Natural killer cell (primary cell): ENCODE measurements at regions of chr5 and their contacts with region 1.

Region 1: GRCh38 chr5:143108498-143109117 is 294.9 kb downstream of the NR3C1 start:
- DNase-seq: no peak
- ATAC-seq: no peak
- H3K4me3 ChIP-seq: no peak overlapping the region
- H3K4me3 Mint-ChIP-seq: no peak overlapping the region
- H3K27ac ChIP-seq: no peak overlapping the region
- H3K27ac Mint-ChIP-seq: peak overlapping the region in 1 of 2 donors; percentile 8
- H3K4me1 ChIP-seq: no peaks in the 10 kb centered on the region
- H3K4me1 Mint-ChIP-seq: peaks cover 38 to 55% of the 10 kb centered on the region in 2 donors
- H3K27me3 ChIP-seq: no peaks in the 10 kb centered on the region
- H3K27me3 Mint-ChIP-seq: no peaks in the 10 kb centered on the region
- CTCF ChIP-seq: no peak

Region 2: GRCh38 chr5:143121135-143121475 is 12.5 kb after region 1 on chr5:
- intact Hi-C with region 1: loop called (anchors 1 kb)
- DNase-seq: peak; percentile 17 to 52
- ATAC-seq: peak; percentile 73 to 92 (median 74)
- H3K4me3 ChIP-seq: no peak overlapping the region
- H3K4me3 Mint-ChIP-seq: peak overlapping the region; percentile 22
- H3K27ac ChIP-seq: no peak overlapping the region
- H3K27ac Mint-ChIP-seq: peak overlapping the region; percentile 27 to 72
- H3K4me1 ChIP-seq: peaks cover 11% of the 10 kb centered on the region
- H3K4me1 Mint-ChIP-seq: peaks cover 56 to 59% of the 10 kb centered on the region in 2 donors
- H3K27me3 ChIP-seq: no peaks in the 10 kb centered on the region
- H3K27me3 Mint-ChIP-seq: no peaks in the 10 kb centered on the region
- CTCF ChIP-seq: no peak

Region 3: DNA sequence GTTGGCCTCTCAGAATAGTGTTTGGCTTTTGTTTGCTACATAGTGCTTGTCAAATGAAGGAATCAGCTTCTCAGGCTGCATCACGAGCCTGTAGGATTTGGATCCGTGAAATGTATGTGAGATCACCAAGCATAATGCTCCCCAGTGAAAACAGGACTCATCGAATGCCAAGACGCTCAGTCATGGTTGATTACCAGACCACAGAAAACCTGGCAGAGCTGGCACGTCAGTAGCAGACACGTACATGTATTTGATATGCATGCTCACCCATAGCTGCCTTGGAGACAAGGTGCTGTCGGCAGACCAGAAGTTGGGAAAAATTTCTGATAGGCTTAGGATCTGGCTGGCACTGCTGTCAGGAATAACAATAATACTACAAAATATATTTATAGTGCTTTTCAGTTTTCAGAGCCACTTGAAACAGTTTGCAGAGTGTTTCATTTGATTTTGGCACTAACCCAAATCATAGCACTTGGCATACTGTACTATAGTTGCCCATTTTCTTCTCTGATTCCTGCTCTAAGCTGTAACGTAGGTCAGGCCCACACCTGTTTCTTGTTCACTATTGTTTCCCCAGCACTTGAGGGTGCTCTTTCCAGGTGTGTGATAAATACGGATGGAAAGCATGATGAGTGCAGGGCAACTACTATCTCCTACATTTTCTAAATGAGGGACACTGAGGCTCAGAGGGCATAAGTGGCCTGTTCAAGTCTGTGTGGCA is 68.8 kb after region 1 on chr5:
- intact Hi-C with region 1: no loop called
- DNase-seq: no peak
- ATAC-seq: no peak
- H3K4me3 ChIP-seq: no peak overlapping the region
- H3K4me3 Mint-ChIP-seq: no peak overlapping the region
- H3K27ac ChIP-seq: no peak overlapping the region
- H3K27ac Mint-ChIP-seq: no peak overlapping the region
- H3K4me1 ChIP-seq: no peaks in the 10 kb centered on the region
- H3K4me1 Mint-ChIP-seq: peaks cover 26 to 36% of the 10 kb centered on the region in 2 donors
- H3K27me3 ChIP-seq: no peaks in the 10 kb centered on the region
- H3K27me3 Mint-ChIP-seq: no peaks in the 10 kb centered on the region
- CTCF ChIP-seq: no peak